ENCODE measurements at regions of chr3 and their contacts with region 1.

Region 1: GRCh38 chr3:155805802-155806618 is at the start of gene C3orf33:
- DNase-seq: peak; percentile 70
- H3K4me3 Mint-ChIP-seq: peak within 1 kb of the TSS; percentile 83
- H3K27ac Mint-ChIP-seq: peak within 1 kb of the TSS; percentile 74
- H3K4me1 Mint-ChIP-seq: peaks cover 10% of the 10 kb centered on the region
- H3K27me3 Mint-ChIP-seq: peaks cover 6% of the 10 kb centered on the region
- total RNA-seq, gene C3orf33: 1.9 and 2.0 TPM in 2 replicates

Region 2: GRCh38 chr3:154151969-154152368 is 1654.0 kb before region 1 on chr3:
- intact Hi-C with region 1: no loop called
- DNase-seq: no peak
- H3K4me3 Mint-ChIP-seq: no peak overlapping the region
- H3K27ac Mint-ChIP-seq: no peak overlapping the region
- H3K4me1 Mint-ChIP-seq: no peaks in the 10 kb centered on the region
- H3K27me3 Mint-ChIP-seq: peaks cover 5% of the 10 kb centered on the region

Region 3: DNA sequence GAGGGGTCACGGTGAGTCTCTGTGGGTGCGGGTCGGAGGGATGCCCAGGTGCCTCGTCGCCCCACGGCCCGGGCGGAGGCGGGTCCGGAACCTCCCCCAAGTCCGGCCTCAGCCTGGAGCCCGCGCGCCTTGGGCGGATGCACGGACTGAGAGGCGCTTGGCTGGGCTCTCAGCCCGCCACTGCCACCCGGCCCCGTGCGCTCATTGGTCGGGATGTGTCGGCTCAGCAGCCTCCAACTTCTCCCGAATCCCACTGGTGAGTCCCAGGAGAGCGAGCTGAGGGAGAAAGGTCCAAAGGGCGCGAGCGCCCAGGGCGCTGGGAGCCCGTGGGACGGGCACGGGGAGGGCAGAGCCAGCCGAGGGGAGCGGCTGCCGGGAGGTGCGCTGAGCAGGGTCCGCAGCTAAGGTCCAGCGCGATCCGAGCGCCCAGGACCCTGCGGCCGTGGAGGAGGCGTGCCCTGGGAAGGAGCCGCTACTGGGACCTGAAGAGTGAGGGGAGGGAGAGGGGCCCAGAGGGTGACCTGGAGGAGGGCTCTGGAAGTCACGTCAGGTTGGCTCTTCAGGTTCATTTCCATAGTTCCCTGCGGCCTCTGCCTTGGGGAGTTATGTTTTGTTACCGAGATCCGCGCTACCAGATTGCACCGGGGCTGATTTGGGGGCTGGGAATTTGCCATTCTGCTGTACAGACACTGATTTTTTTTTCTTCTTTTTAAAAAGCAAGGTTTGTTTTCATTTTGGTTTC is 726.1 kb before region 1 on chr3 and contains the start of gene MME:
- intact Hi-C with region 1: no loop called
- DNase-seq: no peak
- H3K4me3 Mint-ChIP-seq: no peak within 1 kb of the TSS
- H3K27ac Mint-ChIP-seq: no peak within 1 kb of the TSS
- H3K4me1 Mint-ChIP-seq: peaks cover 5% of the 10 kb centered on the region
- H3K27me3 Mint-ChIP-seq: peaks cover 26% of the 10 kb centered on the region
- total RNA-seq, gene MME: not detected in 2 replicates

Region 4: GRCh38 chr3:155554777-155555451 is 251.1 kb before region 1 on chr3:
- intact Hi-C with region 1: no loop called
- DNase-seq: peak; percentile 26
- H3K4me3 Mint-ChIP-seq: peak overlapping the region; percentile 43
- H3K27ac Mint-ChIP-seq: peak overlapping the region; percentile 3
- H3K4me1 Mint-ChIP-seq: peaks cover 28% of the 10 kb centered on the region
- H3K27me3 Mint-ChIP-seq: no peaks in the 10 kb centered on the region

Region 5: DNA sequence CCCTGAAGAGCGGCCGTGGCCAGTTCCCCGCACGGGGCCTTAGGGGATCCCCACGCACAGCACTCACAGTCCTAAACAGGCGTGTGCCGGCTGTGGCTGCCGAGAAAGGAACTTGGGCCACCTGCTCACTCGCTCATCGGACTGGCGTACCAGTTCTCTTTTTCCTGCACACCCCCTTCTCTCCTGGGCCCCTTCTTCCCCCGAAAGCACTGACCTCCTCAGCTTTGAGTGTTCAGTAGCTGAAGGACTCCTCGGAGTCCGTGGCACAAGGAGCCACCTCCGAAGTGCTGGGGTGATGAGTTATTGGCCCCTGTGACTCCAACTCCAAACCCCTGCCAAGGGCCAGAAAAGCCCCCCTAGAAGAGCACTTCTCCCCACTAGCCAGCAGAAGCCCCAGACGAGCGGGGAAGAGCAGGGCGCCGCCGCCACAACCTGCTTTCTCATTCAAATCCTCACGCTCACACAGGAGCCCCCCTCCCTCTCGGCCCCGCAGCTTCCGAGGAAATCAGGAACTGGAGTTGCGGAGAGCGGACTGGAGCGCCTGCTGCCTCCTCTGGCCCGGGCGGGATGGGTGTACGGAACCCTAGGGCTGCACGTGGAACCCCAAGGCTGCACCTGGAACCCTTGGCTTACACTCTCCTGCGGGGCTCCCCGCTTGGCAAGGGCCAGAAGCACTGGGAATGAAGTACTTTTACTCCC is 61.2 kb before region 1 on chr3 and contains the start of gene PLCH1:
- intact Hi-C with region 1: loop called (anchors 5 kb)
- DNase-seq: no peak
- H3K4me3 Mint-ChIP-seq: peak within 1 kb of the TSS; percentile 84
- H3K27ac Mint-ChIP-seq: peak within 1 kb of the TSS; percentile 25
- H3K4me1 Mint-ChIP-seq: peaks cover 11% of the 10 kb centered on the region
- H3K27me3 Mint-ChIP-seq: peaks cover 73% of the 10 kb centered on the region
- total RNA-seq, gene PLCH1: 0.10 and 0.16 TPM in 2 replicates

Region 6: GRCh38 chr3:155791190-155791589 is 14.8 kb before region 1 on chr3:
- intact Hi-C with region 1: no loop called
- DNase-seq: no peak
- H3K4me3 Mint-ChIP-seq: no peak overlapping the region
- H3K27ac Mint-ChIP-seq: no peak overlapping the region
- H3K4me1 Mint-ChIP-seq: no peaks in the 10 kb centered on the region
- H3K27me3 Mint-ChIP-seq: no peaks in the 10 kb centered on the region

Region 7: GRCh38 chr3:155870133-155870944 is 64.3 kb after region 1 on chr3 and contains the start of gene GMPS:
- intact Hi-C with region 1: loop called (anchors 1 kb)
- DNase-seq: peak; percentile 98
- H3K4me3 Mint-ChIP-seq: peak within 1 kb of the TSS; percentile 98
- H3K27ac Mint-ChIP-seq: peak within 1 kb of the TSS; percentile 96
- H3K4me1 Mint-ChIP-seq: peaks cover 23% of the 10 kb centered on the region
- H3K27me3 Mint-ChIP-seq: no peaks in the 10 kb centered on the region
- total RNA-seq, gene GMPS: 131 and 144 TPM in 2 replicates

Region 8: DNA sequence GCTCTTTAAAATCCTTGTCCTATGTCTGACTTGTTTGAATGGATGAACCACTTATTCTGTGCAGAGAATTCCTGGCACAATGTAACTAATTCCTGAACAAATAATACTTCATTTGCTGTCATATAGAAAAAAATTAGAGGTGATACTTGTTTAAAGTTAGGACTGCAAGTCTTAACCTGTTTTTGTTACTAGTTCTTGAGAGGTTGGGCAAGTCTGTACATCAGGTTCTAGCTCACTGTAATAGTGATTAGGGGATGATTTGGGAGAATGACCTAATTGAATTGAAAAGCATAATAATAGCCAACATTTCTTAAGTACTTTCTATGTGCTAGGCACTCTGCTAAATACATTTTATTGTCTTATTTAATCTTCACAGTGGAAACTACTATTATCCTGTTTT is 113.7 kb after region 1 on chr3:
- intact Hi-C with region 1: loop called (anchors 5 kb)
- DNase-seq: no peak
- H3K4me3 Mint-ChIP-seq: no peak overlapping the region
- H3K27ac Mint-ChIP-seq: no peak overlapping the region
- H3K4me1 Mint-ChIP-seq: no peaks in the 10 kb centered on the region
- H3K27me3 Mint-ChIP-seq: no peaks in the 10 kb centered on the region

Measured in activated T-helper 1 cell treated with anti-CD3 and anti-CD28 coated beads, Interleukin-12 subunit alpha, Interleukin-12 subunit beta, Interleukin-2, Interleukin-4 antibody, amounts not matched to agents 30 ng/mL and 10 ng/mL and 1 ng/mL, durations not matched to agents 14 hours and 24 hours and 36 hours (primary cell).